Activated CD4-positive, alpha-beta memory T cell treated with anti-CD3 and anti-CD28 coated beads, Interleukin-2, amount 10 ng/mL, durations not matched to agents 7 days and 5 days (primary cell): ENCODE measurements at regions of chr1 and their contacts with region 1.

Region 1: DNA sequence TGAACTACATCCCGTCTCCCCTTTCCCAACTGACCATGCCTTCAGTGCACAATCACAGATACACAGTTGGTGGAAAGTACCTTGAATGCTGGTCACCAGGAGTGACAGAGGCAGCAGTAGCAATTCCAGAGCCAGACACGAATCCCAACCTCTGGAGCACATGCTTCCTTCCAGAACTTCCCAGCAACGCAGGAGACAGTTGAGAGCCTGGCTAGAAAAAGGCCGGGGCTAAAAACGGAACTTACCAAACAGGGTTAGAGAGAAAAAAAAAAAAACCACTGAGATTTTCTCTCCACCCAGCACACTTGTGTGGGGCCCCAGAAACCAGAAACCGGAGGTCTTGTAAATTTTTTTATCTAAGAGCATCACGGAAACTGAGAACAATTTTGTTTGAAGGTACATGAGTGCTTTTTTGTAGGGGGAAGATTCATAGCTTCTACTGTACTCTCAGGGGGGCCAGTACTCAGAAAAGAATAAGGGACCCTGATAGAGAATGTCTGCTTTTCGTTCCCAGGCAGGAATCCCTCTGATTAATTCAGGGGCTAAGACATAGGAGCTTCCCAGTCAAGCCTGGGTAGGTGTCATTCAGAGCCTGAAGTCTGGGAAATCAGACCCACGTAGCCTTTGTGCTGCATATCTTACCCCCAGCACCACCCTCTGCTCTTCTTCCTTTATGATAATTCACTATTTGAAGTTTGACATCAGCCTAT is at the start of gene CD48:
- DNase-seq: peak; percentile 61
- H3K4me3 Mint-ChIP-seq: no peak within 1 kb of the TSS
- H3K27ac Mint-ChIP-seq: no peak within 1 kb of the TSS
- H3K4me1 Mint-ChIP-seq: peaks cover 20% of the 10 kb centered on the region
- H3K27me3 Mint-ChIP-seq: no peaks in the 10 kb centered on the region
- total RNA-seq, gene CD48: 403 to 404 TPM

Region 2: GRCh38 chr1:160629286-160630210 is 82.2 kb before region 1 on chr1:
- CTCF ChIA-PET with region 1: interaction called, 3 read pairs
- POLR2A ChIA-PET with region 1: interaction called, 25 read pairs
- DNase-seq: peak; percentile 81
- H3K4me3 Mint-ChIP-seq: peak overlapping the region; percentile 62
- H3K27ac Mint-ChIP-seq: peak overlapping the region; percentile 99
- H3K4me1 Mint-ChIP-seq: peaks cover 96% of the 10 kb centered on the region
- H3K27me3 Mint-ChIP-seq: no peaks in the 10 kb centered on the region

Region 3: GRCh38 chr1:160637821-160638539 is 73.8 kb before region 1 on chr1:
- CTCF ChIA-PET with region 1: interaction called, 5 read pairs
- POLR2A ChIA-PET with region 1: interaction called, 12 read pairs
- DNase-seq: peak; percentile 73
- H3K4me3 Mint-ChIP-seq: peak overlapping the region; percentile 70
- H3K27ac Mint-ChIP-seq: peak overlapping the region; percentile 95
- H3K4me1 Mint-ChIP-seq: peaks cover 95% of the 10 kb centered on the region
- H3K27me3 Mint-ChIP-seq: no peaks in the 10 kb centered on the region